Activated CD4-positive, alpha-beta memory T cell treated with anti-CD3 and anti-CD28 coated beads, Interleukin-2, amount 10 ng/mL, durations not matched to agents 7 days and 5 days (primary cell): ENCODE measurements at regions of chr17 and their contacts with region 1.

Region 1: GRCh38 chr17:41695954-41696756 is 7.5 kb downstream of the EIF1 start:
- DNase-seq: peak; percentile 81
- H3K4me3 Mint-ChIP-seq: no peak overlapping the region
- H3K27ac Mint-ChIP-seq: no peak overlapping the region
- H3K4me1 Mint-ChIP-seq: peaks cover 24% of the 10 kb centered on the region
- H3K27me3 Mint-ChIP-seq: no peaks in the 10 kb centered on the region

Region 2: DNA sequence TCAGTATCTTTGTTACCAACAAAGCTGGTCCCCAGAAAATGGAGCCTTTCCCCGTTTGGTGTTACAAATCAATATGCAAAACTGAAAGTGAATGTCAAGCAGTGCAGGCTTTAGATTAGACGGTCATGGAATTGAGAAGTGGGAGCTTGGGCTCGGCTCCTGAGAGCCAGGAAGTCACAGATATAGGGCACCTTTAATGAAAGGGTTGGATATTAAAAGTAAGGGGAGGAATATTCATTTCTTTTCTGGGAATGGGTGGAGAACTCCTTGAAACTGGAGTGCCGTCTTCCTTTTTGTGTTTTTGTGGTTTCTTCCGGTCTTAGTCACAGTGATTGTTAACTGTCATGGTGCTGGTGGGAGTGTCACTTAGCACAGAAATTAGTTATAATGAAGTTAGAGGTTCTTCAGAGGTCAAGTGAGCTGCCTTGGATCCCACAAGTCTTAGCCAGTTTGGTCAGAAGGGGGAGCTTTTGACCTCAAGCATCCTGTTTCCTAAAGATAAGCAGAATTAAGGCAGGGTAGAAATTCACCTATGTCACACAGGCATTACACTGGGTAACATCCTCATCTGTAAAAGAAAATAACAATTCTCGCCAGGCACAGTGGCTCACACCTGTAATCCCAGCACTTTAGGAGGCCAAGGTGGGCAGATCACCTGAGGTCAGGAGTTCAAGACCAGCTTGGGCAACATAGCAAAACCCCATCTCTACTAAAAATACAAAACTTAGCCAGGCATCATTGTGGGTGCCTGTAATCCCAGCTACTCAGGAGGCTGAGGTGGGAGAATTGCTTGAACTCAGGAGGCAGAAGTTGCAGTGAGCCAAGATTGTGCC is 17.0 kb before region 1 on chr17:
- CTCF ChIA-PET with region 1: interaction called, 172 read pairs
- POLR2A ChIA-PET with region 1: interaction called, 494 read pairs
- DNase-seq: peak; percentile 84
- H3K4me3 Mint-ChIP-seq: peak overlapping the region; percentile 87
- H3K27ac Mint-ChIP-seq: peak overlapping the region; percentile 95
- H3K4me1 Mint-ChIP-seq: peaks cover 65% of the 10 kb centered on the region
- H3K27me3 Mint-ChIP-seq: no peaks in the 10 kb centered on the region

Region 3: DNA sequence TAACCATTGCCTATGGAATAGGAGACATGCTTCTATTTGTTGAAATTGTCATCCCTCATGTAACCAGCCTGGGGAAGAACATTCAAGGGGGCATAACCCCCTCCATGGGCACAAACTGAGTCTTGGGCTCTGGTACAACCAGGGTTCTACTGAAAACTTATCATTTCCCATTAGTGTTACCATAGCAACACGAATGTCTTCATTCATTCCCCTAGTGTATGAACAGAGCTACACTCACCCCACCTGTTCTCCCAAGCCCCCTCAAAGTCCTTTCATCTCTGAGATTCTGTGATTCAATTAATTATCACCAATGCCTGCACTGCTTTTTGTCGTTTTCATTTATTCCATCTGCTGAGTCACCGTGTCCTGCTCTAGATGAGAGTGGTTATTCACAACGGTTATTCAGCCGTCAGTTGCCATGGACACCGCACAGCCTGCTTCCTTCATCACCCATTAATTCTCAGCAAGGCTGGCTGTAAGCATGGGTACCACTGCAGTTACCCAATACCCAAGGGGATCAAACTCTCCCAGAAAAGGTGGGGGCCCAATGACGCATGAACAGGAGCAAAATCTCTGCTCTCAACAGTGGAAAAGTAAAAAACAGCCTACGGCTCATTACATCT is 14.4 kb after region 1 on chr17:
- CTCF ChIA-PET with region 1: interaction called, 23 read pairs
- POLR2A ChIA-PET with region 1: interaction called, 9 read pairs
- DNase-seq: peak; percentile 27
- H3K4me3 Mint-ChIP-seq: no peak overlapping the region
- H3K27ac Mint-ChIP-seq: no peak overlapping the region
- H3K4me1 Mint-ChIP-seq: peaks cover 4% of the 10 kb centered on the region
- H3K27me3 Mint-ChIP-seq: peaks cover 21% of the 10 kb centered on the region